ENCODE measurements at regions of chr6 and their contacts with region 1.

Region 1: DNA sequence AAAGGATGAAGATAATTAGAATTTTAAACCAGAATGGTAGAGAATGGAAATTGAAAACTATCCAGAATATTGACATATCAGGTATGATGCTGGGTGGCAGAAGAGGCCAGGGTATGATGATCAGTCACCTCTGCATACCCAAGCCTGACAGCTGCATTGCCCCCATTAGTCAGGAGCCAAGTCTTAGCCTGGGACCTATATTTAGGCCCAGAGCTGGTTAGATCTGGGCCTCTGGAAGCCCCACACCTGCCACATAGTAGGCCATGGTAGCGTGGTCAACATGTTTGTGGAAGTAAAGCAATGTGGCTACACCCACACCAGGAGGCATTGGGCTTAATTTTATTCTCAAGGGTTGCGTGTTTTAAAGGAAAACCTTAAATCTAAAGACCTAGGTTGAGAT is 32.1 kb upstream of the CALHM6 start:
- DNase-seq: no peak
- ATAC-seq: no peak
- H3K4me3 ChIP-seq: no peak overlapping the region
- H3K27ac ChIP-seq: no peak overlapping the region
- H3K4me1 ChIP-seq: no peaks in the 10 kb centered on the region; the same call in 1 of the 2 replicates
- H3K27me3 ChIP-seq: no peaks in the 10 kb centered on the region
- CTCF ChIP-seq: no peak
- POLR2A ChIP-seq: no peak
- RAD21 ChIP-seq: no peak

Region 2: GRCh38 chr6:116411284-116411623 is 17.9 kb before region 1 on chr6:
- CTCF ChIA-PET with region 1: interaction called, 3 read pairs
- POLR2A ChIA-PET with region 1: interaction called, 14 read pairs
- dilution Hi-C with region 1: no loop called
- in situ Hi-C with region 1: no loop called
- intact Hi-C with region 1: no loop called
- DNase-seq: peak; percentile 74
- ATAC-seq: peak; percentile 65
- H3K4me3 ChIP-seq: no peak overlapping the region
- H3K27ac ChIP-seq: no peak overlapping the region
- H3K4me1 ChIP-seq: peaks cover 6% of the 10 kb centered on the region
- H3K27me3 ChIP-seq: no peaks in the 10 kb centered on the region
- CTCF ChIP-seq: no peak
- POLR2A ChIP-seq: no peak
- RAD21 ChIP-seq: no peak

Region 3: DNA sequence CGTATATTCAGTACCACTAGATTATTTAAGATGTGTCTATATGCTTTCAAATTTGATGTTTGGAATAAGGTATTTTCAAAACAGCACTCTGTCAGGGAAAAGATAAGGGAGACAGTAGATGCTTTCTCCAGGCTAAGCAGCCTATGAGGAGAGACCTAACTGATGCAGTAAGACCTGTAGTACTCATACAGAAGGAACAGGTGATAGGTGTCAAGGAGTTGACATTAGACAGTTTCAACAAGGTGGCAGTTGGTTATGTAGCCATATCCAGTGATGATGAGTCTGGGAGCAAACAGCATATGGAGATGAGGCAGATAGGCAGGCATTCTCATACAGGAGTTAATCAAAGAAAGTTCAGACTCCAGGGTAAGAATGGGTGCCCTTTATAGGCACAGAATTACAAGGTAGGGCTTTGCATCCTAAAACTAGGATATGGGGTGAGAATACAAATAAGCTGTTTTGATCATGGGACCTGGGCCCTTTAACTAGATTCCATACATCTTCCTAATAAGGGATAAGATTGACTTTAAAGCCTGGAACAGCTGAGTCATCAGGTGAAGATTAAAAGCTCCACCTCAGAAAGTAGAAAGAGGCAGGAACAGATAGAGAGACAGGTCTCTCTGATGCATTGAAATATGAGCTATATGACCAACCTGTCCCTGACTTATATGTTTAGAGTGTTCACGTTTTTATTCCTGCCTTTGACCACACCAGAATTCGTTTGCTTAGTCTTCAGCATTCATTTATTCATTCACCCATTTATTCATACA is 195.1 kb after region 1 on chr6:
- CTCF ChIA-PET with region 1: no interaction called
- POLR2A ChIA-PET with region 1: no interaction called
- dilution Hi-C with region 1: no loop called
- in situ Hi-C with region 1: no loop called
- intact Hi-C with region 1: no loop called
- DNase-seq: no peak
- ATAC-seq: no peak
- H3K4me3 ChIP-seq: no peak overlapping the region
- H3K27ac ChIP-seq: no peak overlapping the region
- H3K4me1 ChIP-seq: no peaks in the 10 kb centered on the region
- H3K27me3 ChIP-seq: no peaks in the 10 kb centered on the region
- CTCF ChIP-seq: no peak
- POLR2A ChIP-seq: no peak
- RAD21 ChIP-seq: no peak

Region 4: DNA sequence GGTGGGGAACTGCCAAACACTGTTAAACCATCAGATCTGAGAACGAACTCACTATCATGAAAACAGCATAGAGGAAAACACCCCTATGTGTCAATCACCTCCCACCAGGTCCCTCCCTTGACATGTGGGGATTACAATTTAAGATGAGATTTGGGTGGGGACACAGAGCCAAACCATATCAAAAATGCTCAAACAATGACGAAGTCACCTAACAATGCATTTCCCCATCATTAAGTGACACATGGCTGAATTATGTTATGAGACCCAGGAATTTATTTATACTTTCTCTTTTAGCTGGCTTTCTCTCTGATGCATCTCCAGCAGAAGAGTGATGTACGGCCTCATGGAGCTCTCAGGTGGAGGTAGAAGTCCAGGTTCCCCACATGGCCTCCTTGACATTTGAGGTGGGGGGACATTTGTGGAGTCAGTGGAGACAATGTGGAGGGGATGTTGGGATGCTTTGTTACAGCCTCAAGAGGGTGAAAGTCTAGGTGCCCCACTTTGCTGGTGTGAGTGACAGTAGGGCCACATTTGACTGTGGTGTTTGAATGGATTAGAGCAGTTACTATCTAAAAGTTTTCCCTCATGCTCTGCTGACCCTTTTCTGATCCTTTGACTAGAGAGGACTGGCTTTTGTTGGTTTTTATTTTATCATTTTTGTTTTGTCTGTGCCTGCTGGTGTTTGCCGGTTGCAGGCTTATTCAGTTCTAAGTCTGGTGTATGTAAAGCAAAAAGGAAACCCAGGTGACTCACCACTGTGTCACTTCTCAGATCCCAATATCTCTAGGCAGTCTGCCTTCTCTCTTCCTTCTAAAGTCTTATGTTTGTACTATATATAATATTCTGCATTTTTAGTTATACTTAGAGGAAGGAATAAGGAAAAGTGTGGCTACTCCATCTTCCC is 1034.9 kb after region 1 on chr6:
- CTCF ChIA-PET with region 1: no interaction called
- POLR2A ChIA-PET with region 1: no interaction called
- dilution Hi-C with region 1: no loop called
- in situ Hi-C with region 1: no loop called
- intact Hi-C with region 1: no loop called
- DNase-seq: peak; percentile 90
- ATAC-seq: peak; percentile 95
- H3K4me3 ChIP-seq: no peak overlapping the region; the same call in 1 of the 2 replicates
- H3K27ac ChIP-seq: peak overlapping the region; percentile 62
- H3K4me1 ChIP-seq: peaks cover 10% of the 10 kb centered on the region
- H3K27me3 ChIP-seq: no peaks in the 10 kb centered on the region
- CTCF ChIP-seq: no peak
- POLR2A ChIP-seq: no peak
- RAD21 ChIP-seq: no peak